ENCODE measurements at regions of chr1 and their contacts with region 1.

Region 1: DNA sequence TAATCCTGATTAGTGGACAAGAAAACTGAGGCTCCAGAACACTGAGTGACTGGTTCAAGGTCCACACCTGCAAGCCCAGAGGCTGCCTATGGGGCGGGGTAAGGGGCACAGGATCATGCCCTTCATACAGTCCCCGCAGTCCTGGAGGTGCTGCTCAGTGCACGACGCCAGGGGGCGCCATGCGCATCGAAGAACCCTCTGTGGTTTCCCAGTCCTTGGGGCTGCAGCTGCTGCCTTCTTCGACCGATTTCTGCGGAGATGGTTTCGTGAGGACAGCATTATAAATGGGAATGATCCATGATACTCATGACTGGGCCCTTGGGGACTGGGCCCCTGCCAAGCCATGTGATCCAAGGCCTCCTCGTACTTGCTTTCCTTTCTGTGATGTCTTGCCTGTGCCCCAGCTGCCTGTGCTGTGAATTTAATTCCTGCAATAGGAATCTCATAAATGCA is 37.1 kb upstream of the ARHGEF10L start:
- DNase-seq: peak; percentile 76 to 99 (median 89)
- ATAC-seq: peak; percentile 96 to 99 (median 99)
- H3K4me3 ChIP-seq: no peak overlapping the region
- H3K27ac ChIP-seq: no peak overlapping the region
- H3K4me1 ChIP-seq: no peaks in the 10 kb centered on the region
- H3K27me3 ChIP-seq: no peaks in the 10 kb centered on the region
- CTCF ChIP-seq: peak; percentile 85 to 96 (median 91)

Region 2: DNA sequence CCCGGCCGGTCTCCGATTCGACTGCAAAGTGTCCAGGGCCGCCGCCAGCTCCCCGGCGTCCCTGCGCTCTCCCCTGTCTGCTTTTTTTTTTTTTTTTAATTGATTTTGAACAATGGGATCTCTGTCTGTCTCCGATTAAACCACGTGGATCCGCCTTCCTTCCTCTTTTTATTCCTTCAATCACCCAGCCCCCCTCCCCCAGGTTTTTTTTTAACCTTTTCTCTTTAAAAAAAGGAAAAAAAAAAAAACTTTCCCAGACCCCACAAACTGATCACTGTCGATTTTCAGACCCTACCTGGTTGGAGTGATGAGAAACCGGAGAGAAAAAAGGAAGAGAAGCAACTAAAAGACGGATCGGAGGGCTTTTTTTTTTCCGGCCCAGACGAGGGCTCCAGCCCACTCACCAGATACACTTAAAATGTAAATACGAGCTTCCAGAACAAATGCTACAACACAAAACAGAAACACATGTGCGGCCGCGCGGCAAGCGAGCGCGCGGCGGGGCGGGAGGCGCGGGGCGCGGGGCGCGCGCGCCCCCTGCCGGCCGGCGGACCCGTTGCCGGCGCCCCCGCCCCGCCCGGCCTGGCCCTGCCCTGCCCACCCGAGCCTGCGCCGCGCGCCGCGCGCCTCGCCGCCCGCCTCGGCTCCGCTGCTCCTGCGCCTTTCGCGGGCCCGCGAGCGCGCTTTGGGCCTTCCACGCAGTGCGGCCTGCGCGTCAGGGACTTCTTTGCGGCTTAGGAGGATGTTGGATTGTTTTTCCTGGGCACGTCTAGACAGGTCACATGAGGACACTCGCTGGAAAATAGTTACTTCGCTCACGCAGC is 62.9 kb before region 1 on chr1 and contains the start of gene RCC2:
- intact Hi-C with region 1: no loop called
- DNase-seq: peak; percentile 50 to 85 (median 68)
- ATAC-seq: peak; percentile 64 to 78 (median 76)
- H3K4me3 ChIP-seq: peak within 1 kb of the TSS; percentile 60 to 85 (median 76)
- H3K27ac ChIP-seq: peak within 1 kb of the TSS; percentile 48 to 81 (median 63)
- H3K4me1 ChIP-seq: peaks cover 0 to 6% (median 6%) of the 10 kb centered on the region in 3 donors
- H3K27me3 ChIP-seq: no peaks in the 10 kb centered on the region
- CTCF ChIP-seq: no peak
- total RNA-seq, gene RCC2: 11.5 to 45.4 (median 18.8) TPM

Region 3: DNA sequence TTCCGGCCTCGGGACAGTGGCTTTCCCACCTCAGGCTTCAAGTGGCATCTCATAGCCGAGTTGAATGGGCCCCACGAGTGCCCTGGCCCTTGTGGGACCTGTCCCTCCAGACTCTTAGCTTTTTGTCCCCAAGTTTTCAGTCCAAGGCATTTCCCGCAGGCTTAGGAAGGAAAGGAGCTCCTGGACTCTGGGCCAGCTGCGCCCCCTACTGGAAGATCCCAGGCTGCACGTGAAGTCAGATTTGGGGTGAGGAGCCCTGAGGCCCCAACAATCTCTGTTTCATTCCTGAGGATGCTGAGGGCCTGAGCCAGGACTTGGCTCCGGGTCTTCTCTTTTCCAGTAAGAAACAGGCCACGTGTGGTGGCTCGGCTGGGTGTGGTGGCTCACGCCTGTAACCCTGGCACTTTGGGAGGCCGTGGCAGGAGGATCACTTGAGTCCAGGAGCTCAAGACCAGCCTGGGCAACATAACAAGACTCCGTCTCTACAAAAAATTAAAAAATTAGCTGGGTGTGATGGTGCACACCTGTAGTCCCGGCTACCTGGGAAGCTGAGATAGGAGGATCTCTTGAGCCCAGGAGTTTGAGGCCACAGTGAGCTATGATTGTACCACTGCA is 104.6 kb after region 1 on chr1:
- intact Hi-C with region 1: loop called (anchors 2 to 10 kb)
- DNase-seq: peak in 5 of 6 donors; percentile 56 to 85 (median 78)
- ATAC-seq: peak; percentile 67 to 76 (median 70)
- H3K4me3 ChIP-seq: no peak overlapping the region
- H3K27ac ChIP-seq: no peak overlapping the region
- H3K4me1 ChIP-seq: peaks cover 0 to 5% (median 0%) of the 10 kb centered on the region in 3 donors
- H3K27me3 ChIP-seq: no peaks in the 10 kb centered on the region
- CTCF ChIP-seq: peak; percentile 78 to 93 (median 90)

Measured in pancreas (tissue), 10 donors.